ENCODE measurements at regions of chr7 and their contacts with region 1.

Region 1: DNA sequence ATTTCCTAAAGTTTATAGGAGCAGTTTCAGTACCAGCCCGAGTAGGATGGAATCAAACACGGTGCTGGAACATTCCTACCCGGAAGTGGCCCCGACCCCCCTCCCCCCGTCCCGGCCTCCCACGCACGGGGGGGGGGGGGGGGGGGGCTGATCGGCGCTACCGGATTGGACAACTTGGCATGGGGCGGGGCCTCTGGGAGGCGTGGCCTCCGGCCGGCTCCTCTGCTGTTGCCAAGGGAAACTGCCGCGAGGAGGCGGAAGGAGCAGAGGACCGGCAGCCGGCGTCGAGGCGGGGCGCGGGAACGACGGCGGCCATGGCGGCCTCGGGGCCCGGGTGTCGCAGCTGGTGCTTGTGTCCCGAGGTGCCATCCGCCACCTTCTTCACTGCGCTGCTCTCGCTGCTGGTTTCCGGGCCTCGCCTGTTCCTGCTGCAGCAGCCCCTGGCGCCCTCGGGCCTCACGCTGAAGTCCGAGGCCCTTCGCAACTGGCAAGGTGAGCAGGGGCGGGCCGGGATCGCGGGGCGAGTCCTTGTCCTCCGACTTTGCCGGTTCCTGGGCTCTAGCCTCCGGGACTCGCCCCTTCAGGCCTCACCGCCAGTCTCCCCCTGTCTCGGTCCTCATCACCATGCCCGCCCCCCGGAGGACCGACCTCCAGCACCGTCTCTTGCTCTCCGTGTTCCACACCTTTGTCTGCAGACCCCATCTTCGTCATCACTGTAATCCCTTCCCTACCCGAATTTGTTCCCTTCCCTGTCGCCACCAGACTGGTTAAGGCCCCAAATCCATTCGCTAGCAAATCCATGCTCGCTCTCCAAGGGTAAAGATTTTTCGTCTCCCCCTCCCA is at the start of gene RHBDD2:
- DNase-seq: peak; percentile 89
- ATAC-seq: peak; percentile 98
- H3K4me3 Mint-ChIP-seq: peak within 1 kb of the TSS; percentile 97
- H3K27ac Mint-ChIP-seq: peak within 1 kb of the TSS; percentile 94
- H3K4me1 Mint-ChIP-seq: peaks cover 26% of the 10 kb centered on the region
- H3K27me3 Mint-ChIP-seq: no peaks in the 10 kb centered on the region
- CTCF ChIP-seq: no peak
- total RNA-seq, gene RHBDD2: 28.4 and 32.8 TPM in 2 replicates

Region 2: GRCh38 chr7:75711656-75712514 is 167.1 kb before region 1 on chr7:
- CTCF ChIA-PET with region 1: no interaction called
- POLR2A ChIA-PET with region 1: no interaction called
- intact Hi-C with region 1: no loop called
- DNase-seq: no peak
- ATAC-seq: no peak
- H3K4me3 Mint-ChIP-seq: no peak overlapping the region
- H3K27ac Mint-ChIP-seq: peak overlapping the region; percentile 16
- H3K4me1 Mint-ChIP-seq: peaks cover 23% of the 10 kb centered on the region
- H3K27me3 Mint-ChIP-seq: no peaks in the 10 kb centered on the region
- CTCF ChIP-seq: no peak

Region 3: DNA sequence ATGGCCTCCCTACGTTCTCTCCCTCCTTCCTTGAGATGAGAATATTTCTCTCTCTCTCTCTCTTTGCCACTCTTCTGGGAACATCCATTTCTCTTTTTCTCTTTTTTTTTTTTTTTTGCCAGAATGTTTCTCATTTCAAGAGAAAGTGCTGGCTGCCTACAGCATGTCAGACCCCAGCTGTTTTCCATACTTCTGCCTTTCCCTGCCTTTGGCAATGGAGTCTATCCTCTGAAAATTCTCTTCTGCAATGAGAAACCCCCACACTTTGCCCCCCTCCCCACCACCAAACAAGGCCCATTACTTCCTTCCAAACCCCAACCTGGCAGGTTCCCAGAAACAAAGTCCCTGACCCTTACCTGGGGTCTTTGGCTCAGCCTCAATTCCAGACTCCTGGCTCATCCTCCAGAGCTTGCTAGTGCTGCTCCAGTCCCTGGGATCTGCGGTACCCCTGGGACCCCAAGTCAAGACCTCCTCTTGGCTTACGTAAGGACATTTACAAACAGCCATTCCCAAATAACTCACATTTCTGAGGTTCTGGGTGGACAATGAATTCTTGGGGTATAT is 89.5 kb before region 1 on chr7:
- CTCF ChIA-PET with region 1: no interaction called
- POLR2A ChIA-PET with region 1: no interaction called
- intact Hi-C with region 1: no loop called
- DNase-seq: no peak
- ATAC-seq: no peak
- H3K4me3 Mint-ChIP-seq: no peak overlapping the region
- H3K27ac Mint-ChIP-seq: no peak overlapping the region
- H3K4me1 Mint-ChIP-seq: no peaks in the 10 kb centered on the region
- H3K27me3 Mint-ChIP-seq: peaks cover 2% of the 10 kb centered on the region
- CTCF ChIP-seq: no peak

Region 4: DNA sequence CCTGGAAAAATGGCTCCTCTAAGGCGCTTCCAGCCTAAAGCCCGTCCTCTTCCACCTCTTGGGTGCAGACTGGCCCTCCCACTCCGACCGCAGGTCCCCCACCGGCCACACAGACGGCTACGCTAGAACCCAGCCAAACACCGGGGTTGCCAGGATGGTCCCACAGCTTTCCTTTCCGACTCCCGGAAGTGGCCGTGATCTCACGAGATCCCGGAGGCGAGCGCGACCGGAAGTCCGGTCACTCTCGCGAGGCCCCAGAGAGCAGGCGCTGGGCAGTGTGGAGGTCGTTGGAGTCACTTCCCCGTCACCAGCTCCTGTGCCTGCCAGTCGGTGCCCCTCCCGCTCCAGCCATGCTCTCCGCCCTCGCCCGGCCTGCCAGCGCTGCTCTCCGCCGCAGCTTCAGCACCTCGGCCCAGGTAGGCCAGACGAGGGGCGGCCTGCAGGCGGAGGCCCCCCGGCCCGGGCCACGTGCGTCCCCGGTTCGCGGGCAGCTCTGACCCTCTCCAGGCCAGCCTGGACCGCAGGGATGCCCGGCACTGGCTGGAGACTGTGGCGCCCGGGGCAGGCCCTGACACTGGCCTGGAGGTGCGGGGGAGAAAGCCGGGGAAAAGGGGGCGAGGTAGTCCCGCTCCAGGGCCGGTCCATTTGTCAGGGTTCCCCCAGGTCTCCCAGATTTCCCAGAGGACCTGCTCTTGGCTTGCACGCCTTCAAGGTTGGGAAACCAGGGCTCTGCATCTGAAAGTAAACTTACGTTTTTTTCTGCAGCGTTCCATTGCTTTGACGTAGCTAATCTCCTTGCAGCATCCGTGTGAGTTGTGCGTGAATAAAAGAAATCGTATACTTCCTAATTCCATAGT is 169.0 kb after region 1 on chr7 and contains the starts of genes MDH2 and STYXL1:
- CTCF ChIA-PET with region 1: no interaction called
- POLR2A ChIA-PET with region 1: interaction called, 11 read pairs
- intact Hi-C with region 1: loop called (anchors 1 kb)
- DNase-seq: peak; percentile 82
- ATAC-seq: peak; percentile 89
- H3K4me3 Mint-ChIP-seq: peak within 1 kb of the TSS; percentile 98
- H3K27ac Mint-ChIP-seq: peak within 1 kb of the TSS; percentile 95
- H3K4me1 Mint-ChIP-seq: peaks cover 40% of the 10 kb centered on the region
- H3K27me3 Mint-ChIP-seq: no peaks in the 10 kb centered on the region
- CTCF ChIP-seq: no peak
- total RNA-seq, gene MDH2: 120 and 125 TPM in 2 replicates
- total RNA-seq, gene STYXL1: 23.1 and 28.1 TPM in 2 replicates

Region 5: GRCh38 chr7:76133164-76133775 is 254.3 kb after region 1 on chr7:
- CTCF ChIA-PET with region 1: no interaction called
- POLR2A ChIA-PET with region 1: no interaction called
- intact Hi-C with region 1: loop called (anchors 5 kb)
- DNase-seq: no peak
- ATAC-seq: no peak
- H3K4me3 Mint-ChIP-seq: peak overlapping the region; percentile 29
- H3K27ac Mint-ChIP-seq: peak overlapping the region; percentile 24
- H3K4me1 Mint-ChIP-seq: peaks cover 10% of the 10 kb centered on the region
- H3K27me3 Mint-ChIP-seq: peaks cover 24% of the 10 kb centered on the region
- CTCF ChIP-seq: no peak

Measured in activated B cell treated with CpG ODN at 0.5 μM for 24 hours (primary cell).